Heart left ventricle (tissue), 16 donors: ENCODE measurements at regions of chr12 and their contacts with region 1.

Region 1: GRCh38 chr12:106114447-106115068 is 24.2 kb downstream of the NUAK1 start:
- DNase-seq: no peak
- ATAC-seq: no peak
- H3K4me3 ChIP-seq: no peak overlapping the region
- H3K27ac ChIP-seq: peak overlapping the region; percentile 30 to 99 (median 75)
- H3K4me1 ChIP-seq: peaks cover 22 to 100% (median 86%) of the 10 kb centered on the region in 12 donors
- H3K27me3 ChIP-seq: no peaks in the 10 kb centered on the region
- CTCF ChIP-seq: no peak
- POLR2A ChIP-seq: no peak

Region 2: GRCh38 chr12:106084014-106084671 is 30.4 kb before region 1 on chr12:
- intact Hi-C with region 1: loop called in 1 of 10 experiments (anchors 5 kb)
- DNase-seq: no peak
- ATAC-seq: no peak
- H3K4me3 ChIP-seq: no peak overlapping the region
- H3K27ac ChIP-seq: peak overlapping the region in 6 of 12 donors; percentile 12 to 68 (median 35)
- H3K4me1 ChIP-seq: peaks cover 7 to 76% (median 53%) of the 10 kb centered on the region in 12 donors
- H3K27me3 ChIP-seq: no peaks in the 10 kb centered on the region
- CTCF ChIP-seq: no peak
- POLR2A ChIP-seq: no peak